Activated CD8-positive, alpha-beta memory T cell treated with anti-CD3 and anti-CD28 coated beads, Interleukin-2, amount 10 ng/mL, durations not matched to agents 7 days and 5 days (primary cell): ENCODE measurements at regions of chr2 and their contacts with region 1.

Region 1: DNA sequence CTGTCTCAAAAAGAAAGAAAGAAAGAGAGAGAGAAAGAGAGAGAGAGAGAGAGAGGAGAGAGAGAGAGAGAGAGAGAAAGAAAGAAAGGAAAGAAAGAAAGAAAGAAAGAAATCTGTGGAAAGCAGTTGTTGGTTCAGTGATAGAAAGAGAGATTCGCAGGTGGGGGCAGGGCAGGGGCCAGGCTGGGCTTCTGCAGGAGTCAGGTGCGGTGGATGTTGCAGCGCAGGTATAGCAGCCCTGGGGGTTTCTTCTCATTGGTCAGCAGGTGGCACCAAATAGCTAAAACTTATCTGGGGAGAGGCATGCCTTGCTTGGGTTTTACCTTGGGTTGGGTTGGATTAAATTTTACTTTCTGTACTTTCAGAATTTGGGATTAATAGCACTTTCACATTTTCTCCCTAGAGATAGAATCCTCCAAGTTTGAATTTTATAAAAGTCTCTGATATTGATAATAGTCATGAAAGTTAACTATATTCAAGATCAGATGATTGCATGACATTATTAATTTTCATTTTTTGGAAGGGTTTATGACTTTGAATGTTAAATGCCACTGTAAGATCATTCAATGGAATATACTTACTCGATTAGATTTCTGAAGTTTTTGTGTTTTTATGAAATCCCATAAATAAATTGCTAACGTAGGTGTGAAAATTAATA is 66.6 kb downstream of the SPTBN1 start:
- DNase-seq: peak; percentile 71
- ATAC-seq: peak; percentile 96
- H3K4me3 Mint-ChIP-seq: no peak overlapping the region
- H3K27ac Mint-ChIP-seq: no peak overlapping the region
- H3K4me1 Mint-ChIP-seq: peaks cover 22% of the 10 kb centered on the region
- H3K27me3 Mint-ChIP-seq: peaks cover 10% of the 10 kb centered on the region

Region 2: GRCh38 chr2:54611830-54612545 is 89.2 kb after region 1 on chr2:
- CTCF ChIA-PET with region 1: no interaction called
- DNase-seq: no peak
- ATAC-seq: no peak
- H3K4me3 Mint-ChIP-seq: no peak overlapping the region
- H3K27ac Mint-ChIP-seq: no peak overlapping the region
- H3K4me1 Mint-ChIP-seq: peaks cover 16% of the 10 kb centered on the region
- H3K27me3 Mint-ChIP-seq: no peaks in the 10 kb centered on the region

Region 3: GRCh38 chr2:54657664-54658083 is 134.9 kb after region 1 on chr2:
- CTCF ChIA-PET with region 1: interaction called, 29 read pairs
- DNase-seq: peak; percentile 52
- ATAC-seq: no peak
- H3K4me3 Mint-ChIP-seq: no peak overlapping the region
- H3K27ac Mint-ChIP-seq: no peak overlapping the region
- H3K4me1 Mint-ChIP-seq: peaks cover 22% of the 10 kb centered on the region
- H3K27me3 Mint-ChIP-seq: no peaks in the 10 kb centered on the region

Region 4: DNA sequence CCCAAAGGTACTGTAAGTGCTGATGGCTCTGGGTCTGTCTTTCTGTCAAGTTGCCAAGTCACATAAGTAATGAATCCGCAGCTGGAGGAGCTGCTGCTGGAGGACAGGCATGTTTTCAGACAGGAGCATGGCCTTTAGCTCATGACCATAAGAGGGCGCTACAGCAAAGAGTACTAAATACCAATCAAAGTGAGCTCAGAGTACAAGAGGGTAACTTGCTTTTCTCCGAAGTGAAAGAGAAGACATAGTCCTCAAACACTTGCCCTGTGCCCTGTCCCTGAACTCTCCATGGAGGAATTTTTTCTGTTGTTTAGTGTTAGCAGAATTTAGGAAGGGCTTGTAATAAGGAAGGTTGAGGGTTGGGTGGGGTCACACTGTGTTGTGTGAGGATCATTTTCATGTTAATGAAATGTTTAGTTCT is 142.7 kb after region 1 on chr2:
- CTCF ChIA-PET with region 1: interaction called, 18 read pairs
- DNase-seq: peak; percentile 61
- ATAC-seq: peak; percentile 49
- H3K4me3 Mint-ChIP-seq: no peak overlapping the region
- H3K27ac Mint-ChIP-seq: no peak overlapping the region
- H3K4me1 Mint-ChIP-seq: peaks cover 17% of the 10 kb centered on the region
- H3K27me3 Mint-ChIP-seq: no peaks in the 10 kb centered on the region